Sigmoid colon (tissue), 7 donors: ENCODE measurements at regions of chr5 and their contacts with region 1.

Region 1: GRCh38 chr5:148949841-148950470 is 112.9 kb downstream of the SH3TC2 start:
- DNase-seq: peak; percentile 96
- H3K4me3 ChIP-seq: no peak overlapping the region
- H3K27ac ChIP-seq: peak overlapping the region; percentile 76 to 81 (median 80)
- H3K4me1 ChIP-seq: peaks cover 0 to 19% (median 18%) of the 10 kb centered on the region in 4 donors
- H3K27me3 ChIP-seq: no peaks in the 10 kb centered on the region
- CTCF ChIP-seq: no peak
- EP300 ChIP-seq: peak; percentile 18 to 63 (median 44)
- POLR2A ChIP-seq: no peak

Region 2: DNA sequence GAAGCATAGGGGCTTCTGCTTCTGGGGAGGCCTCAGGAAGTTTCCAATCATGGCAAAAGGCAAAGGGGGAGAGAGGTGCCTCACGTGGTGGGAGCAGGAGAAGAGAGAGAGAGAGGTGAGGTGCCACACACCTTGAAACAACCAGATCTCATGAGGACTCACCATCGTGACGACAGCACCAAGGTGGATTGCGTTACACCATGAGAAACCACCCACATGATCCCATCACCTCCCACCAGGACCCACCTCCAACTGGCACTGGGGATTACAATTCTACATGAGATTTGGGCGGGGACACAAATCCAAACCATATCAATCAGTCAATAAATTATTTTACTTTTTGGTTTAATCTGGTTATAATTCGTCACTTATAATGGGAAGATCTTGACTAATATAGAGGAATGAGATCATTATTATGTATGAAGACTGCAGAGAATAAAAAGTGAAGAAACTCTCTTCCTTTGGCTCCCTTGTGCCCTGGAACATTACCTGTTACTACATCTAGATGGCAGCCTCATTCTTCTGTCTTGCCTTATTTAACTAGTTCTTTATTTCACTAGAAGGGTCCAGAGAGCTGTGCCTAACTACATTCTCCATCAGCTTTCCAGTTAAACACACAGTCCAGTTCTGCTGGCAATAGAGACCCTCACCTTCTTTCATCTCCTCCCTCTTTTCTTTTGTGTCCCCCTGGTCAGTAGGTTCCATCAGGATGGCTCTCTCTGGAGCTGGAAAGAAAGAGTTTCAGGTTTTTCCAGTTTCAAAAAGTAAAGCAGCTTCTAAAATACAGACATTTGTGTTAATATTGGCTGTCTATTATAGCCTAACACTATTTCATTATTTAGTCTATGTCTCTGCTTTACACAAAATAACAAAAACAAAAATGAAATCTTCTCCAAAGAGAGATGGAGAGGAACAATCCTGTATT is 659.4 kb before region 1 on chr5:
- intact Hi-C with region 1: no loop called
- DNase-seq: no peak
- H3K4me3 ChIP-seq: no peak overlapping the region
- H3K27ac ChIP-seq: no peak overlapping the region
- H3K4me1 ChIP-seq: no peaks in the 10 kb centered on the region
- H3K27me3 ChIP-seq: no peaks in the 10 kb centered on the region
- CTCF ChIP-seq: peak in 3 of 4 experiments; percentile 10 to 37 (median 27)
- EP300 ChIP-seq: no peak
- POLR2A ChIP-seq: no peak

Region 3: GRCh38 chr5:148904440-148904839 is 45.5 kb before region 1 on chr5:
- intact Hi-C with region 1: loop called (anchors 5 kb)
- DNase-seq: peak; percentile 91
- H3K4me3 ChIP-seq: no peak overlapping the region
- H3K27ac ChIP-seq: peak overlapping the region; percentile 60 to 78 (median 70)
- H3K4me1 ChIP-seq: peaks cover 0 to 24% (median 11%) of the 10 kb centered on the region in 4 donors
- H3K27me3 ChIP-seq: no peaks in the 10 kb centered on the region
- CTCF ChIP-seq: no peak
- EP300 ChIP-seq: peak in 1 of 4 donors; percentile 58
- POLR2A ChIP-seq: no peak